Gastrocnemius medialis (tissue), 4 donors: ENCODE measurements at regions of chr12 and their contacts with region 1.

Region 1: GRCh38 chr12:13278249-13278787 is 81.8 kb downstream of the EMP1 start:
- DNase-seq: peak; percentile 15 to 29
- ATAC-seq: peak; percentile 79 to 82
- H3K4me3 ChIP-seq: peak overlapping the region in 1 of 4 donors; percentile 24
- H3K27ac ChIP-seq: no peak overlapping the region
- H3K4me1 ChIP-seq: no peaks in the 10 kb centered on the region
- H3K27me3 ChIP-seq: no peaks in the 10 kb centered on the region
- CTCF ChIP-seq: peak; percentile 77 to 98 (median 82)
- POLR2A ChIP-seq: no peak

Region 2: DNA sequence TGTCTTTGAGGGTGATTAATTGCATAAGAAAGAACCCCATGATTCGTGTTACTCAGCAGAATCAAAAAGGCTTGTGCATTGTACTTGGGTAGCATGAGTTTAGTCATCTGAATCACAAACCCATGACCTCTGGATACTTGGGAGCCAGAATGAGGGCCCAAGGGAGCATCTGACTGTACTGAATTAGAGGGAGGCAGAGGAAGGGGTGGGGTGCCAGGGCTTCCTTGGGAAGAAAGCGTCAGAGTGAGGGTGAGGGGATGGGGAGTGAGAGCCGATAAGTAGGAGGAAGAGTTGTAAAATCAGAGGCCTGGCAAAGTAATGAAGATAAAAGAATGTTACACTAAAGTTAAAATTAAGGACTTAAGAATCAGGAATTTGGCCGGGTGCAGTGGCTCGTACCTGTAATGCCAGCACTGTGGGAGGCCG is 356.1 kb before region 1 on chr12:
- in situ Hi-C with region 1: no loop called
- intact Hi-C with region 1: no loop called
- DNase-seq: no peak
- ATAC-seq: peak; percentile 71 to 73
- H3K4me3 ChIP-seq: no peak overlapping the region
- H3K27ac ChIP-seq: no peak overlapping the region
- H3K4me1 ChIP-seq: no peaks in the 10 kb centered on the region
- H3K27me3 ChIP-seq: no peaks in the 10 kb centered on the region
- CTCF ChIP-seq: no peak
- POLR2A ChIP-seq: no peak

Region 3: DNA sequence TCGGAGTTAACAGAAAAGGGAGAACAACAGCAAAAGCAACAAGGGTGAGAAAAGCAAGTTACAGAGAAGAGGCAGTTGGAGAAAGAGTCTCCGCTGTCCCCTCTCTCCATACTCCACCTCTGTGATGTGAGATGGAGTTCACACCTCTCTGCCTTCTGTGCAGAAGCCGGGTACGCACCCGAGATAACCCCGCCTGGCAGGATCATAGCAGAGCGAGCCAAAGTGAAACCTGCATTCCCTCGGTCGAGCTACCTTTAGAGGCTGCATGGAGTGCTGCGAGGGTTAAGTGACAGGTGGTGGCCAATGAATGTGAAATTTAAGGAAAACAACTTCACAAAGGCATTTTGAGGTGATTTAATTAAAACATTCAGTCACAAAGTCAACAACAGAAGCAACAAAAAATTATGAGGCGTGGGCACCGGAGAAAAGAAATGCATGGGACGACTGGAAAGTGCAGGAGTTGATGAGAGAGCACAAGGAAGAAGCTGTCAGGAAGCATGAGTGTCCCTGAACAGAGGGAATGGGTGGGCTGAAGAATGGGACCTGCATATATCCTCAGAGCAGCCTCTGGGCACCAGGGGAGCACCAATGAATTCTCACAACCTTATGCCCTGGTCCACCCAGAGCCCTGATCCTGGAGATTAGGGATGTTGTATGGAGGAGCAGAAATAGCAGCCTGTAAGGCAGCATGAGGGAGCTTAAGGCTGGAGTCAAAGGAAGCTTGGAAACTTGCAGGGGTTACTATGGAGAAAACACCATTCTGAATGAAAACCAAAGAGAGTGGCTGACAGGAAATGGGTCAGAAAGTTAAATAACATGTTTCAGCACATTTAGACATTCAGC is 126.5 kb after region 1 on chr12:
- in situ Hi-C with region 1: no loop called
- intact Hi-C with region 1: loop called (anchors 10 kb)
- DNase-seq: no peak
- ATAC-seq: no peak
- H3K4me3 ChIP-seq: no peak overlapping the region
- H3K27ac ChIP-seq: no peak overlapping the region
- H3K4me1 ChIP-seq: no peaks in the 10 kb centered on the region
- H3K27me3 ChIP-seq: no peaks in the 10 kb centered on the region
- CTCF ChIP-seq: no peak
- POLR2A ChIP-seq: no peak

Region 4: GRCh38 chr12:13534645-13535398 is 256.5 kb after region 1 on chr12:
- in situ Hi-C with region 1: loop called in 1 of 4 experiments (anchors 10 kb)
- intact Hi-C with region 1: loop called (anchors 10 kb)
- DNase-seq: peak in 1 of 2 donors; percentile 24
- ATAC-seq: no peak
- H3K4me3 ChIP-seq: peak overlapping the region in 1 of 4 donors; percentile 15
- H3K27ac ChIP-seq: no peak overlapping the region
- H3K4me1 ChIP-seq: no peaks in the 10 kb centered on the region
- H3K27me3 ChIP-seq: no peaks in the 10 kb centered on the region
- CTCF ChIP-seq: peak; percentile 55 to 75 (median 64)
- POLR2A ChIP-seq: no peak

Region 5: DNA sequence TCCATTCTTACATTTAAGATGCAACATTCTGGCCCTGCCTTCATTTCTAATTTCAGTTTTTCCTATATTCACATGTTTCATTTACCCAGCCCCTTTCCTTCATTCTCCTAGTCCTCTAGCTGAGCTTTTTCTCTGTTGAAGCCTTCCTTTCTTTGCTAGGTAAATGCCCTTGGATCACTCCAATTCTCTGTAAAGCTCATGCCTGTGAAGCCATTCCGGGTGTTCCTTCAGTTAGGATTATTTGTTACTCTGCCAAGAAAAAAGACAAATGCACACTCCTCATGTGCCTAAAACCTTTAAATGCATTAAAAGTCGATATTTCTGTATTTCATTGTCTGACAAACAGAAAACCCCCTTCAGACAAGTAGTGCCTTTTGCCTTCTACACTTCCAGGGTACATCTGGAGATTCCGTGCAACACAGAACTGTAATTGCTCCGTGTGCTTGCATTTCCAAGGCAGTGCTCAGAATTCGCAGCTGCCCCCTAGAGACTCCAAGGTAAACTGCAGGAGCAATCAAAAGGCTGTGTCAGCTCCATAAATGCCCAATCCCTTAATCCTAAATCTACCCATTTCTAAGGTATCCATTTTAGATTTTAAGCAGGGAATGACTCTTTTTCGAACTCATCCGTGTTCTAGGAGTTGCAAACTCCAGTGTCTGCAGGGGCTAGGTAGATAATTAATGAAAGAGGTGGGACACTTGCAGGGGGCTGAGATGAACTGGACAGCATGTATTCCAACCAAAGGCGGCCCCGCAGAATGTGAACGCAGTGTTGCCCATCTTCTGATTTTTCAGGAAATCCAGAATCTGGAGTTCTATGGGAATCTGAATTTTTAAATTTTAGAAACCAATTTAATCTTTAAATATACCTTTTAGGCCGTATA is 382.9 kb after region 1 on chr12:
- in situ Hi-C with region 1: no loop called
- intact Hi-C with region 1: loop called (anchors 10 kb)
- DNase-seq: peak; percentile 7 to 11
- ATAC-seq: peak in 1 of 2 donors; percentile 56
- H3K4me3 ChIP-seq: no peak overlapping the region
- H3K27ac ChIP-seq: no peak overlapping the region
- H3K4me1 ChIP-seq: no peaks in the 10 kb centered on the region
- H3K27me3 ChIP-seq: no peaks in the 10 kb centered on the region
- CTCF ChIP-seq: peak; percentile 27 to 69 (median 44)
- POLR2A ChIP-seq: no peak

Region 6: GRCh38 chr12:13811061-13811460 is 532.7 kb after region 1 on chr12:
- in situ Hi-C with region 1: no loop called
- intact Hi-C with region 1: no loop called
- DNase-seq: no peak
- ATAC-seq: no peak
- H3K4me3 ChIP-seq: no peak overlapping the region
- H3K27ac ChIP-seq: no peak overlapping the region
- H3K4me1 ChIP-seq: no peaks in the 10 kb centered on the region
- H3K27me3 ChIP-seq: no peaks in the 10 kb centered on the region
- CTCF ChIP-seq: no peak
- POLR2A ChIP-seq: no peak

Region 7: GRCh38 chr12:14167005-14167628 is 888.8 kb after region 1 on chr12:
- in situ Hi-C with region 1: loop called in 2 of 4 experiments (anchors 25 kb)
- intact Hi-C with region 1: loop called (anchors 2 kb)
- DNase-seq: no peak
- ATAC-seq: peak in 1 of 2 donors; percentile 42
- H3K4me3 ChIP-seq: no peak overlapping the region
- H3K27ac ChIP-seq: no peak overlapping the region
- H3K4me1 ChIP-seq: no peaks in the 10 kb centered on the region
- H3K27me3 ChIP-seq: no peaks in the 10 kb centered on the region
- CTCF ChIP-seq: peak; percentile 43 to 87 (median 69)
- POLR2A ChIP-seq: no peak